ENCODE measurements at regions of chr14 and their contacts with region 1.

Region 1: GRCh38 chr14:31297701-31298344 is 90.2 kb upstream of the HECTD1 start:
- DNase-seq: no peak
- H3K4me3 ChIP-seq: no peak overlapping the region
- H3K27ac ChIP-seq: no peak overlapping the region
- H3K4me1 ChIP-seq: peaks cover 0 to 11% (median 2%) of the 10 kb centered on the region in 4 experiments; a peak in 2 of 7 replicates
- H3K27me3 ChIP-seq: no peaks in the 10 kb centered on the region
- CTCF ChIP-seq: no peak
- EP300 ChIP-seq: no peak
- POLR2A ChIP-seq: no peak
- RAD21 ChIP-seq: no peak

Region 2: DNA sequence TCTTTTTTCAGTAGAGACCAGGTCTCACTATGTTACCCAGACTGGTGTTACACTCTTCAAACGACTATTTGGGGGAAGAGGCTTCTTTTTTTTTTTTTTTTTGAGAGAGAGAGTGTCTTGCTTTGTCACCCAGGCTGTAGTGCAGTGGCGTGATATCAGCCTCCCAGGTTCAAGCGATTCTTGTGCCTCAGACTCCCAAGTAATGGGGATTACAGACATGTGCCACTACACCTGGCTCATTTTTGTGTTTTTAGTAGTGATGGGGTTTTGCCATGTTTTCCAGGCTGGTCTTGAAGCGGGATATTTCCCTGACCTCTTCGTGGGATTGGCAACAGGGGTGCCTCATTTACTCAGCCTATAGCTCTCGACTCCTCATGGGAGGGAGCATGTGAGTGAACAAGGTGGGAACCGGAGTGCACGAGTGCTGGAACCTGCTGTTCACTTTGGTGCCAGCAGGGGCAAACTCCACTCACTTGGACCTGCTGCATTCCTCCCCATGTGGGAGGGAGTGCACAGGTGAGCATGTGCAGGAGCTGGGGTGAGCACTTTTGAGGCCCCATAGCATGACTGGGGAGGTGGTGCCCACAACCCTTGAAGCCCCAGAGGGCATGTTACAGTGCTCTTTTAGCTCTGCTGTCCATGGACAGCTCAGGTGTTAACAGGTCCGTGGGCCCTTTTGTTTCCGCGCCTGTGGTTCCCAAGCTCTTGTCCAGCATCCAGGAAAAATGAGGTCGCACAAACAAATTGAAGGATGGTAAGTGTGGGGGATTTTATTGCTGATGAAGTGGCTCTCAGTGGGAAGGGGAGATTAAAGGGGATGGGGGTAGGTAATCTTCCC is 11.1 kb before region 1 on chr14:
- CTCF ChIA-PET with region 1: interaction called, 31 read pairs
- POLR2A ChIA-PET with region 1: interaction called, 3 read pairs
- DNase-seq: peak; percentile 49 to 68
- H3K4me3 ChIP-seq: no peak overlapping the region
- H3K27ac ChIP-seq: no peak overlapping the region
- H3K4me1 ChIP-seq: no peaks in the 10 kb centered on the region
- H3K27me3 ChIP-seq: no peaks in the 10 kb centered on the region
- CTCF ChIP-seq: peak; percentile 45 to 78 (median 75)
- EP300 ChIP-seq: no peak
- POLR2A ChIP-seq: no peak
- RAD21 ChIP-seq: peak; percentile 39 to 56; a peak in 3 of 4 replicates

Region 3: GRCh38 chr14:31326111-31326510 is 28.3 kb after region 1 on chr14:
- CTCF ChIA-PET with region 1: no interaction called
- POLR2A ChIA-PET with region 1: no interaction called
- DNase-seq: no peak
- H3K4me3 ChIP-seq: no peak overlapping the region
- H3K27ac ChIP-seq: no peak overlapping the region
- H3K4me1 ChIP-seq: no peaks in the 10 kb centered on the region
- H3K27me3 ChIP-seq: peaks cover 0 to 1% (median 0%) of the 10 kb centered on the region in 4 experiments; a peak in 1 of 7 replicates
- CTCF ChIP-seq: no peak
- EP300 ChIP-seq: no peak
- POLR2A ChIP-seq: no peak
- RAD21 ChIP-seq: peak in 1 of 2 experiments; percentile 20; a peak in 1 of 4 replicates